A549 (cell line): ENCODE measurements at regions of chr20 and their contacts with region 1.

Region 1: DNA sequence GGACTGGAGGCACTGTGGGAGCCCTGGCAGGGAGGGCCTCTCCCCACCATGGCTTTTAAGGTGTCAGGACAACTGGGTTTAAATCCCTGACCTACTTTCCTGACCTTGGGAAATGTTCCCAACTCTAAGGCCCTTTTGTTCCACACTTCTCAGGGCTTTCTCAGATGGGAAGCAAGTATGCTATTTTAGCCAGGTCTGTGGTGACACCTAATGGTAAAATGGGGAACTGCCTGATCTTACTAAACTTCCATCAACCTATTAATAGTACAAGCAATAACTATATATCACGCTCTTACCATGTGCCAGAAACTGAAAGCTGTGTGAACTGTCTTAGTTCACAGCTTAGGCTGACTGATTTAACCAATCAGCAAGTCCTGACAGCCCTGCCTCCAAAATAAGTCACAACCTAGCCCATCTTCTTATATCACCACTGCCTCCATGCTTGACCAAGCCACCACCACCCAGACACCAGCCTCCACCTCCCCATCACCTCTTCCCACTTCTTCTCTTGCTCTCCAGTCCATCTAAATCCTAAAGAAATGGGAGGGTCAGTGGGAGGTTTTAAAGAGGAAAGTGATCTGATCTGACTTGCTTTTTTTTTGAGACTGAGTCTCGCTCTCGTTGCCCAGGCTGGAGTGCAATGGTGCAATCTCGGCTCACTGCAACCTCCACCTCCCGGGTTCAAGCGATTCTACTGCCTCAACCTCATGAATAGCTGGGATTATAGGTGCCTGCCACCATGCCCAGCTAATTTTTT is 6.9 kb upstream of the BLCAP start:
- DNase-seq: peak; percentile 38 to 79
- ATAC-seq: peak; percentile 81 to 91
- H3K4me3 ChIP-seq: no peak overlapping the region
- H3K27ac ChIP-seq: no peak overlapping the region
- H3K4me1 ChIP-seq: no peaks in the 10 kb centered on the region
- CTCF ChIP-seq: peak; percentile 92
- EP300 ChIP-seq: no peak
- POLR2A ChIP-seq: no peak
- RAD21 ChIP-seq: peak; percentile 94 to 98

Region 2: DNA sequence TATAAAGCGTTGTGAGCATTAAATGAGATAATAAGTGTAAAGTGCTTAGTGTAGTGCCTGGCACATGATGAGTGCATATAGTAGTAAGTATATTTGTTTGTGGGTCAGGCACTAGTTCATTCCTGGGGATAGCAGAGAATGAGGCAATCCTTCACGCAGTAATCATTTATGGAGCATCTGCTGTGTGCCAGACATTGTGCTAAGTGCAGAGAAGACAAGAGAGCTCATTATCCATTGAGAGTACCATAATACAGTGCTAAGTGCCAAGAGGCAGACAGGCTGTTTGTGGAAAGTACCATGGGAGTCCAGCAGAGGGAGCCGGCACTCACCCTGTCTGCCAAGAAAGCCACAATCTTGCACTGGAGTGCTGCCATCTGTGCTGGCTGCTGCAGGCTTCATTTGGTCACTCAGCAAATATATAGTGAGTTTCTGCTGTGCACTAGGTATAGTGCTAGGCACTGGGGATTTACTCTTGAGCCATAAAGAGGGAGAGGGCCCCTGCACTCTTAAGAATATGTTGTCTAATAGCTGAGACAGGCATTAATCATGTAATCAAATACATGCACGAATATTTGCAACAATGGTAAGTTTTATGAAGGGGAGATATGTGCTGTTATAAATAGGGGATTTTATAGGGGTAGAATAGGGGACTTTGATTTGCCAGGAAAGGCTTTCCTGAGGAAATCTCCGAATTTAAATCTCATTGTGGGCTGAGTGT is 342.3 kb before region 1 on chr20:
- CTCF ChIA-PET with region 1: interaction called, 120 read pairs
- POLR2A ChIA-PET with region 1: no interaction called
- DNase-seq: peak; percentile 75 to 82
- ATAC-seq: peak; percentile 91 to 94
- H3K4me3 ChIP-seq: no peak overlapping the region
- H3K27ac ChIP-seq: no peak overlapping the region
- H3K4me1 ChIP-seq: peaks cover 3% of the 10 kb centered on the region; the same call in 1 of the 3 replicates
- CTCF ChIP-seq: peak; percentile 76
- EP300 ChIP-seq: no peak
- POLR2A ChIP-seq: no peak
- RAD21 ChIP-seq: 0 out of 5 replicates have a peak, but pooled peaks have one; percentile 13 to 16

Region 3: DNA sequence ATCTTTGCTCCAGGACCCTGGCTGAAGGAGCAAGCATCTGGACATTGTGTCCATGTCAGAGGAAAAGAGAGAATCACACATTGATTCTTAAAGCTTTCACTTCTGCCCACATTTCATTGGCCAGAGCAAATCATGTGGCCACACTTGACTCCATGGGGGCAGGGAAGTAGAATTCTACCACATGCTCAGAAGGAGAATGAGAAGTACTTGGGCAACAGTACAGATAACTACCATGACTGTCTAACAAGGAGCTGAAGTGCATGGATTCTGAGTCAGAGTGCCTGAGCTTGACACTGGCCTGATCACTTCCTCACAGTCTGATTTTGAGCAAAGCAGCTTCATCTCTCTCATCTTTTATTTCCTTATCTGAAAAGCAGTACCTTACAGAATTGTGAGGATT is 311.5 kb before region 1 on chr20:
- CTCF ChIA-PET with region 1: interaction called, 13 read pairs
- POLR2A ChIA-PET with region 1: no interaction called
- DNase-seq: peak in 1 of 2 experiments; percentile 29
- ATAC-seq: peak; percentile 56 to 77; a peak in 4 of 6 replicates
- H3K4me3 ChIP-seq: no peak overlapping the region
- H3K27ac ChIP-seq: no peak overlapping the region
- H3K4me1 ChIP-seq: no peaks in the 10 kb centered on the region
- CTCF ChIP-seq: no peak
- EP300 ChIP-seq: no peak
- POLR2A ChIP-seq: no peak
- RAD21 ChIP-seq: no peak

Region 4: GRCh38 chr20:37276494-37277252 is 257.9 kb before region 1 on chr20:
- CTCF ChIA-PET with region 1: interaction called, 150 read pairs
- POLR2A ChIA-PET with region 1: no interaction called
- DNase-seq: peak in 1 of 2 experiments; percentile 51
- ATAC-seq: peak; percentile 74 to 82; a peak in 4 of 6 replicates
- H3K4me3 ChIP-seq: no peak overlapping the region
- H3K27ac ChIP-seq: peak overlapping the region; percentile 41 to 67
- H3K4me1 ChIP-seq: peaks cover 11% of the 10 kb centered on the region
- CTCF ChIP-seq: peak; percentile 42
- EP300 ChIP-seq: no peak
- POLR2A ChIP-seq: no peak
- RAD21 ChIP-seq: peak; percentile 62 to 71

Region 5: DNA sequence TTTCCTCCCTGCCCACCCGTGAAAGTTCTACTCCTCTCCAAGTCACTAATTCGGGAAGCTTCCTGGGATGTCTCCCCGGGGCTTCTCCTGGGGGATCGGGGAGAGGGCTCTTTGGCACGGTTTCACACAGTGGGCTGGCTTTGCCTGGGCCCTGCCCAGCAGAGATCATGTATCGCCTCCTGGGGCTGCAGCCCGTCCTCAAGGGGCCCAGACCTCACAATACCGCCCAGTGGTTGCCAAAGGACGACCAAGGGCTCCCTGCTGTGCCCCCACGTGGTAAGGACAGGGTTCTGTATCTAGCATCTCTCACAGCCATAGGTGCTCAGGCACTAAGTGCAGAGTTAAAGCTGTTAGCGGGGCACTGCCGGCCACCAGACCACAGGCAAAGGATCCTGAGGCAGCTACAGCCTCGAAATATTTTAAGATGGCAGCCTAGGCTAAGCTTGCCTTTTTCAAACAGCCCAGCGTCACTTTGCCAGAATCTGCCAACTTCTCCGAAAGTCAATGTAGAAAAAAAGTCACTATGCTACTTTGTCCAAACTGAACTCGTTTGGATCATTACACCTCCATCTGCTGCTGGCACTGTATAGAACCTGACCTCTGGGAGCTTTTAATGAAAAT is 15.0 kb before region 1 on chr20:
- CTCF ChIA-PET with region 1: interaction called, 11 read pairs
- POLR2A ChIA-PET with region 1: no interaction called
- DNase-seq: no peak
- ATAC-seq: peak; percentile 10 to 81; a peak in 3 of 6 replicates
- H3K4me3 ChIP-seq: no peak overlapping the region
- H3K27ac ChIP-seq: no peak overlapping the region
- H3K4me1 ChIP-seq: peaks cover 7% of the 10 kb centered on the region; the same call in 2 of the 3 replicates
- CTCF ChIP-seq: no peak
- EP300 ChIP-seq: no peak
- POLR2A ChIP-seq: no peak
- RAD21 ChIP-seq: no peak